T-cell (primary cell): ENCODE measurements at regions of chr4 and their contacts with region 1.

Region 1: GRCh38 chr4:48360285-48361010 is 19.1 kb downstream of the SLAIN2 start:
- DNase-seq: no peak
- ATAC-seq: no peak
- H3K4me3 ChIP-seq: no peak overlapping the region
- H3K4me3 Mint-ChIP-seq: no peak overlapping the region
- H3K27ac ChIP-seq: no peak overlapping the region
- H3K27ac Mint-ChIP-seq: no peak overlapping the region
- H3K4me1 ChIP-seq: peaks cover 0 to 1% of the 10 kb centered on the region in 2 experiments
- H3K4me1 Mint-ChIP-seq: peaks cover 25 to 29% (median 27%) of the 10 kb centered on the region in 3 donors
- H3K27me3 ChIP-seq: no peaks in the 10 kb centered on the region
- H3K27me3 Mint-ChIP-seq: no peaks in the 10 kb centered on the region

Region 2: DNA sequence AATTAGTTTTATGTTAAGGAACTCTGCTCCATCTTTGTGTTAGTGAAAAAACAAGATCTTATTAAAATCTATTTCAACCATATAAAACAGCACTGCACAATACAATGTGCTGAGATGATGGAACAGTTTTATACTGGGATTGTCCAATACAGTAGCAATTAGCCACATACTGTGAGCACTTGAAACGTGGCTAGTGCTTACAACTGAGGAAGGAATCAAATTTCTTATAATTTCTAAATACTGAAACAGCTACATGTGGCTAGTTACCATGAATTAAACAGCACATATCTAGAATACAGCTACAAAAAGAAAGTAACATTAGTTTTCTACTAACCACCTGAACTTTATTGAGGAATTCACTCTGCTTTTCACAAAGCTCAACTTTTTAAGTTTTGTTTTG is 460.8 kb before region 1 on chr4:
- CTCF ChIA-PET with region 1: no interaction called
- POLR2A ChIA-PET with region 1: interaction called in 1 of 2 experiments, 16 read pairs
- DNase-seq: no peak
- ATAC-seq: no peak
- H3K4me3 ChIP-seq: no peak overlapping the region
- H3K4me3 Mint-ChIP-seq: no peak overlapping the region
- H3K27ac ChIP-seq: no peak overlapping the region
- H3K27ac Mint-ChIP-seq: no peak overlapping the region
- H3K4me1 ChIP-seq: no peaks in the 10 kb centered on the region
- H3K4me1 Mint-ChIP-seq: no peaks in the 10 kb centered on the region
- H3K27me3 ChIP-seq: no peaks in the 10 kb centered on the region
- H3K27me3 Mint-ChIP-seq: no peaks in the 10 kb centered on the region

Region 3: DNA sequence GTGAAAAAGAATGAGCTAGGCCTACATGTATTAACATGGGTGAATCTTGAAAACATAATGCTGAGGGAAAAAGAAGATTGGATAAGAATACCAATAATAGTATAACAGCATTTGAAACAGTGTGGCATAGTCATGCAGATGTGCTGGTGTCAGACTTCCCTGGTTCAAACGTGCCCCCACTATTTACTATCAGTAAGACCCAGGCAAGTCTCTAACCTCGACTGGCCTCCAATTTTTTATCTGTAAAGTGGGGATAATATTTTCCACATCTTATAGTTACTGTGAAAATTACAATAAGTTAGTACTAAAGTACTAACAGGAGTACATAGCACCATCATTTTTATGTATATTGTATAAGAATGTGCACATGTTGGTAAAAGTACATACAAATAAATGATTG is 36.2 kb before region 1 on chr4:
- CTCF ChIA-PET with region 1: no interaction called
- POLR2A ChIA-PET with region 1: no interaction called
- DNase-seq: no peak
- ATAC-seq: no peak
- H3K4me3 ChIP-seq: no peak overlapping the region
- H3K4me3 Mint-ChIP-seq: no peak overlapping the region
- H3K27ac ChIP-seq: no peak overlapping the region
- H3K27ac Mint-ChIP-seq: no peak overlapping the region
- H3K4me1 ChIP-seq: no peaks in the 10 kb centered on the region
- H3K4me1 Mint-ChIP-seq: no peaks in the 10 kb centered on the region
- H3K27me3 ChIP-seq: no peaks in the 10 kb centered on the region
- H3K27me3 Mint-ChIP-seq: peaks cover 0 to 4% of the 10 kb centered on the region in 2 donors